Astrocyte of the cerebellum (primary cell): ENCODE measurements at regions of chr2 and their contacts with region 1.

Region 1: GRCh38 chr2:47664817-47665216 is 118.1 kb upstream of the MSH6 start:
- DNase-seq: no peak
- H3K4me3 ChIP-seq: no peak overlapping the region
- CTCF ChIP-seq: no peak

Region 2: GRCh38 chr2:47719099-47719498 is 54.3 kb after region 1 on chr2:
- in situ Hi-C with region 1: loop called (anchors 5 kb)
- DNase-seq: no peak
- H3K4me3 ChIP-seq: no peak overlapping the region
- CTCF ChIP-seq: no peak